ENCODE measurements at regions of chr9 and their contacts with region 1.

Region 1: GRCh38 chr9:96266282-96267210 is 35.4 kb downstream of the HSD17B3 start:
- DNase-seq: no peak
- H3K4me3 ChIP-seq: no peak overlapping the region
- H3K27me3 ChIP-seq: no peaks in the 10 kb centered on the region
- CTCF ChIP-seq: no peak

Region 2: GRCh38 chr9:95533996-95534680 is 732.4 kb before region 1 on chr9:
- CTCF ChIA-PET with region 1: no interaction called
- POLR2A ChIA-PET with region 1: interaction called, 23 read pairs
- DNase-seq: no peak
- H3K4me3 ChIP-seq: no peak overlapping the region
- H3K27me3 ChIP-seq: peaks cover 3% of the 10 kb centered on the region
- CTCF ChIP-seq: no peak

Region 3: GRCh38 chr9:96299823-96300222 is 33.3 kb after region 1 on chr9:
- CTCF ChIA-PET with region 1: no interaction called
- POLR2A ChIA-PET with region 1: no interaction called
- DNase-seq: no peak
- H3K4me3 ChIP-seq: no peak overlapping the region
- H3K27me3 ChIP-seq: peaks cover 2% of the 10 kb centered on the region
- CTCF ChIP-seq: no peak